ENCODE measurements at regions of chr1 and their contacts with region 1.

Region 1: GRCh38 chr1:227437495-227438008 is 119.3 kb upstream of the CDC42BPA start:
- DNase-seq: peak; percentile 73
- H3K4me3 ChIP-seq: peak overlapping the region; percentile 69
- H3K27ac ChIP-seq: no peak overlapping the region
- H3K4me1 ChIP-seq: no peaks in the 10 kb centered on the region
- H3K27me3 ChIP-seq: no peaks in the 10 kb centered on the region

Region 2: DNA sequence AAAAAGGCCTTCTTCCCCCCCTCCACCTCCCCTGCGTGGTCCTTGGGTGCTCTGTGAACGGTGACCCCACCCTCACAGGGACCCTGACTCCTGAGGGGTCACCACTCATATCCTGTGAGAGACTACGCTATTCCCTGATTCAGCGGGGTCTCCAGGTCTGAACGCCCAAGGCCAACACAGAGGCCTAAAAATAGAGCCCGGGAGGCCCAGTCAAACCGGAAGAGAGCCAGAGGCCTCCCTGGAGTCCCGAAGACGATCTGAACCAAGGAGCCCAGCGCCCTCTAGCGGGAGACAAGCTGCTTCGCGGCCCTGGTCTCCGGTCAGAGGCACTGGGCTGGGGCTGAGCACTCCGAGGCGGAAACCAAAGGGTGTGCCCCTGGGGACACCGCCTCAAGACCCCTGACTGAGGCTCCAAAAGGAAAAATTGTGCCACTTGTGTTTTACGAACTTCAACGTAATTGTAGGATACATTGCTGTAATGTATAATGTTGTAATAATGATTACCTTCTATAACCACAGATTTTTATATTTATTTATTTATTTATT is 609.5 kb before region 1 on chr1:
- in situ Hi-C with region 1: loop called (anchors 25 kb)
- DNase-seq: peak; percentile 97
- H3K4me3 ChIP-seq: peak overlapping the region; percentile 34; the same call in 1 of the 2 replicates
- H3K27ac ChIP-seq: peak overlapping the region; percentile 10; the same call in 1 of the 2 replicates
- H3K4me1 ChIP-seq: peaks cover 7% of the 10 kb centered on the region
- H3K27me3 ChIP-seq: no peaks in the 10 kb centered on the region

Region 3: DNA sequence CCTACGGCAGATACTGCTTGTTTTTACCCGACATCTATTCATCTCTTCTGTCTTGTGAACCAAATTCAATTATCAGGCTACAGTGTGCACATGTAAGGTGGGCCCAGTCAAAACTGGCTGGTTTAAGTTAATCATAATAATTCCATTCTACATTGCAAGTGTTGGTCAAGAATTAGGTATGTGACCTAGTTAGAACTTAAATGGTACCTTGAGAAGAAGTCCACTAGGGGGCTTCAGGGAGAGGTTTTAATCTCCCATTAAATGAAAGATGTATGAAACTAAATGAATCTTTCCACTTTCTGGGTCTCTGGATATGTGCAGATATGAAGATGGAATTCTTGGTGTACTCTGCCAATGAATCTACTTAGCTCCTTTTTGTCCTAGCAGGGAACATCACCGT is 306.4 kb before region 1 on chr1:
- in situ Hi-C with region 1: loop called (anchors 25 kb)
- DNase-seq: peak; percentile 77
- H3K4me3 ChIP-seq: no peak overlapping the region
- H3K27ac ChIP-seq: no peak overlapping the region
- H3K4me1 ChIP-seq: peaks cover 4% of the 10 kb centered on the region; the same call in 1 of the 2 replicates
- H3K27me3 ChIP-seq: no peaks in the 10 kb centered on the region

Region 4: GRCh38 chr1:227234998-227235405 is 202.6 kb before region 1 on chr1:
- in situ Hi-C with region 1: loop called (anchors 25 kb)
- DNase-seq: peak; percentile 65
- H3K4me3 ChIP-seq: no peak overlapping the region
- H3K27ac ChIP-seq: no peak overlapping the region
- H3K4me1 ChIP-seq: no peaks in the 10 kb centered on the region; the same call in 1 of the 2 replicates
- H3K27me3 ChIP-seq: no peaks in the 10 kb centered on the region